Activated naive CD4-positive, alpha-beta T cell treated with anti-CD3 and anti-CD28 coated beads for 36 hours (primary cell): ENCODE measurements at regions of chr3 and their contacts with region 1.

Region 1: DNA sequence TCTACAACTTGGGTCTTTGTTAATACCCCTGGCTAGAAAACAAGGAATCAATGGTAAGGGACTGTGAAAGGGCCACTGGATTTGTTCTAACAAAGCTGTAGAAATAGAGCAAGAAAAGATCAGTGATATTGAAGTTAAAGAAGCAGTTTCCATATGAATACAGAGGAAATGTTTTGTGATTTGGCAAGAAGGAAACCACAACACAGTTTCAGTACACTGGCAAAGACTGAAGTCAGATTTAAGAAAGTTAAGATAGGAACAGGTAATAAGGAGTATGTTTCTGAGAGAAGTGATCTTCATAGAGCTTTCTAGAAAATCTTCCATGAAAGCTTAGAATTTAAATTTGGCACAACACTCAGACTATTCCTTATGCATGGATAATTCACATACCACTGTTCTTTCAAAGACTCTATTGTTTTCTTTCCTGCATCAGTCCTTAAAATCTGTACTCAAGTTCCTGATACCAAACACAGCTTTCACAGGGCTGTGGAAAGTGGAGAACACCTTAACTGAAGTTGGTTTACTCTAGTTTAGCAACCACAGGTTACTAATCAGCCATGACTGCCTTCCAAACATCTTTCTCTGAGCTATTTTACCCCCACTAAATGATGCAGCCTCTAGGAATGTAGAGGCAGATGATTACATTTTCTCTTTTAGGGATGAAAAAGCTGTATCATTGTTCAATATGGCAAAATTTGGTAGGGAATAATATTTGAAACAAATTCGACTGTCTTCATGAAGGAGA is 32.4 kb upstream of the ALCAM start:
- DNase-seq: no peak
- H3K4me3 Mint-ChIP-seq: no peak overlapping the region
- H3K27ac Mint-ChIP-seq: no peak overlapping the region
- H3K4me1 Mint-ChIP-seq: peaks cover 6% of the 10 kb centered on the region
- H3K27me3 Mint-ChIP-seq: peaks cover 15% of the 10 kb centered on the region

Region 2: DNA sequence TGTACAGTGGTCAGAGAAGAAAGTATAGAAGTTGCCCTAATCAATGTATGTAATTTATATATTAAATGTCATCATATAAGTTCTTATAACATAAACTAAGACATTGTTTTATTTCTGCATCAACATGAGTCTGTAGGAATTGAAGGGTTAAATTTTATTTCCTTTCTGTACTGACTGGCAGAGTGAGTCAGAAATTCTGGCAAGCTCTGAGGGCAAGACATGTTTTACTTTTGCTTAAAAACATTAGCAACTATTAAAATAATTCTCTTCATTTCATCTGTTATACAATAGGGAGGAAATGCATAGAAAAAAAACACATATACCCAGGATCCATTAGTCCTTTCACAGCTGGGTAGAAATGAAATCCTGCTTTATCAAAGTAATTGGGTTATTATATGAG is 139.1 kb before region 1 on chr3:
- CTCF ChIA-PET with region 1: no interaction called
- intact Hi-C with region 1: no loop called
- DNase-seq: no peak
- H3K4me3 Mint-ChIP-seq: no peak overlapping the region
- H3K27ac Mint-ChIP-seq: no peak overlapping the region
- H3K4me1 Mint-ChIP-seq: no peaks in the 10 kb centered on the region
- H3K27me3 Mint-ChIP-seq: no peaks in the 10 kb centered on the region

Region 3: DNA sequence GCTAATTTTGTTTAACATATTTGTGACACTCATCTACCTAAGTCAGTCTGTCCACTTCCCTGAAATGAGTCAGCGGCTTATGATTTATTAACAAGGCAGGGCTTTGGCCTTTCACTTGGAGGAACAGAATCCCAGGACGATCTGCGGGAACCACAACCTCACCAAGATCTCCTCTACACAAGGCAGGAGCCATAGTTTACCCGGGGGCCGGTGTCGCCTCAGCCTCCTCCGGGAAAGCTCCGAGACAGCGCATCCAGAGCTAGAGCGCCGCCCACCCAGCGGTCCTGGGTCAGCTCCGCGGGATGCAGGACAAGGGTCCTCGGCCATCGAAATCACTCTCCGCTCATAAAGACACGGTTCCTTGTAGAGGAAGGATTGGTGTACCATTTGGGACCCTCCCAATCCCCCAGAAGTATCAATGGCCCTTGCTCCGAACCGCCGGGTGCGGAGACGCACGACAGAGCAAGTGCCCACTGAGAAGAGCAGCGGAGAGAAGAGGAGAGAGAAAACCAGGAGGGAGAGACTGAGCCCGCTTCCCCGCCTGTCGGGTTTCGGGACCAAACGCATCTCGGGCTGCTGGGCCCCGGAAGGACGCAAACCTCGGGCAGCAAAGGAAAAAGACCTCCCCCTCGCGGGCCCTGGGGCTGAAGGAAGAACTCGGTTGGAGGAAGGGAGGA is 19.3 kb after region 1 on chr3:
- CTCF ChIA-PET with region 1: no interaction called
- intact Hi-C with region 1: loop called (anchors 2 kb)
- DNase-seq: no peak
- H3K4me3 Mint-ChIP-seq: peak overlapping the region; percentile 39
- H3K27ac Mint-ChIP-seq: no peak overlapping the region
- H3K4me1 Mint-ChIP-seq: peaks cover 24% of the 10 kb centered on the region
- H3K27me3 Mint-ChIP-seq: peaks cover 40% of the 10 kb centered on the region